ENCODE measurements at regions of chr1 and their contacts with region 1.

Region 1: DNA sequence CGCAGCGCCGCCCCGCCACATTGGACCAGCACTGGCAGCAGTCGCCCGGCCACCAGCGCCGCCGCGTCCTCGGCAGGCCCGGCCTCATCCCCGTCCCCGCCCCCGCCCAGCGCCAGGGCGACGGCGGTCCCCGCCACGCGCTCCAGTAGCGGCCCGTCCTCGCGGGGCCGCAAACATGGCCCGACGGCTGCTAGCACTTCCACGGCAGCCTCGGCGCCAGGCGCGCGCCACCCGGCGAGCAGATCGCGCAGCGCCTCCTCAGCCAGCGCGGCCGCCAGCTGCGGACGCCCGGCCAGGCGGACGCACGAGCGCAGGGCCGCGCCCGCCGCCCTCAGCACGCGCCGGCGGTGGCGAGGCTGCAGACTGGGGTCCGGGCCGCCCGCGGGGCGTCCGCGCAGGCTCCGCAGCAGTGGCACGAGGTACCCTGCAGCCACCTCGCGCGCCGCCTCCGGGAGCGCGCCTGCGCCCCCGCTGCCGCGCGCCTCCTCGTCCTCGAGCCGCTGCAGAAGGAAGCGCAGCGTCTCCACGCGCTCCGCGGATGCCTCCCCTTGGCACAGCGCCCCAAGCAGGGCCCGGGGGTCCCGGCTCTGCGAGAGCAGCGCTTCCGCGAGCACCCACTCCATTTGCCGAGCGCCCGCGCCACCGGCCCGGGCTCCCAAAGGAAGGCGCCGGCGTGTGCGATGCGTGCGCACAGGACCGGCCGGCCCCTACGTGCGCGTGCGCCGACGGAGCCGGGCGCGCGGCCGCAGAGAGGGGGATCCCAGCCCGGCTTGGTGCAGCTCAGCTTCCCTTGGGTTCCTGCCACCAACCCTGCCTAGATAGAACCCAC is at the start of gene TARBP1:
- DNase-seq: peak; percentile 84 to 95 (median 92)
- ATAC-seq: peak; percentile 85
- H3K4me3 ChIP-seq: peak within 1 kb of the TSS; percentile 73
- H3K27ac ChIP-seq: peak within 1 kb of the TSS; percentile 72
- H3K4me1 ChIP-seq: peaks cover 9 to 25% of the 10 kb centered on the region in 2 experiments; a peak in 4 of 5 replicates
- H3K27me3 ChIP-seq: peaks cover 0 to 5% of the 10 kb centered on the region in 2 experiments; a peak in 1 of 5 replicates
- CTCF ChIP-seq: peak; percentile 12 to 69 (median 41); a peak in 4 of 6 replicates
- EP300 ChIP-seq: no peak
- POLR2A ChIP-seq: peak; percentile 88
- RAD21 ChIP-seq: peak; percentile 21 to 56; a peak in 2 of 4 replicates
- polyA plus RNA-seq, gene TARBP1: 8.8 to 10.4 TPM

Region 2: DNA sequence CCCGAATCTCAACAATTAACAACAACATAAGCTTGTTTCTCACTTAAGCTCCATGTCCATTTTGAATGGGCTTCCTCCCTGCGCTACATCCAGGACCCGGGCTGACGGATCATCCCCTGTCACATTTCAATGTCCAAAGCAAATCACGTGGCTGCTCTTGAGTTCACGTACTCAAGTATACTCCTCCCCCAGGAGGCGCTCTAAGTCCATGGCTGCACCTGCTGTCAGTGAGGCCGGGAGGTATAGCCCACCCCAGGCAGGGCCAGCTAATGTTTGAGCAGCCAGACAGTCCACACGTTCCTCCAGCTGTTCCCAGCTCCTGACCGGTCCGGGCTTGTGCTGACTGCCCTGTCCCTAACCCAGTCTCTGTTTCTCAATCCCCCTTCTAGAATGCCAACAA is 353.4 kb before region 1 on chr1:
- CTCF ChIA-PET with region 1: no interaction called
- POLR2A ChIA-PET with region 1: no interaction called
- in situ Hi-C with region 1: loop called (anchors 10 kb)
- intact Hi-C with region 1: no loop called
- DNase-seq: peak; percentile 45 to 71 (median 52)
- ATAC-seq: peak; percentile 99
- H3K4me3 ChIP-seq: no peak overlapping the region
- H3K27ac ChIP-seq: no peak overlapping the region
- H3K4me1 ChIP-seq: no peaks in the 10 kb centered on the region
- H3K27me3 ChIP-seq: peaks cover 4 to 23% of the 10 kb centered on the region in 2 experiments
- CTCF ChIP-seq: peak; percentile 72 to 82 (median 73)
- EP300 ChIP-seq: no peak
- POLR2A ChIP-seq: no peak
- RAD21 ChIP-seq: peak; percentile 44 to 78

Region 3: DNA sequence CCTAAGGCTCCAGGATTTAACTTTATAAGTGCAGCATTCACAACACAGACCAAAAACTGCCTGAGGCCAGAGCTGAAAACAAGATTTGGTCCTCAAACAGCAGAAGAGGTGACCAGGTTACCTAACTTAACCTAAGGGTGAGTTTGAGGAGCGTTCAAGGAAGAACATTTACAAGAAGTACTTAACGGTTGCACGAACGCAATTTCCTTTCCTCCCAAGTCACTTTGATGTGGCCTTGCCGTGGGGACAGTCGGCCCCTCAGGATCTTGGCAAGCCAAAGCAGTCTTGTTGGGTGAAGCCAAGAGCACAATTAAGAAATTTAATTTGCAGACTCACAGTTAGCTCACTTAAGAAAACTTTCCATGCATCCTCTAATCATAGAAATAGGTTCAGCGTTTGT is 308.1 kb before region 1 on chr1:
- CTCF ChIA-PET with region 1: no interaction called
- POLR2A ChIA-PET with region 1: no interaction called
- in situ Hi-C with region 1: no loop called
- intact Hi-C with region 1: no loop called
- DNase-seq: no peak
- ATAC-seq: no peak
- H3K4me3 ChIP-seq: no peak overlapping the region
- H3K27ac ChIP-seq: no peak overlapping the region
- H3K4me1 ChIP-seq: no peaks in the 10 kb centered on the region
- H3K27me3 ChIP-seq: peaks cover 0 to 36% of the 10 kb centered on the region in 2 experiments; a peak in 3 of 5 replicates
- CTCF ChIP-seq: no peak
- EP300 ChIP-seq: no peak
- POLR2A ChIP-seq: no peak
- RAD21 ChIP-seq: no peak

Region 4: DNA sequence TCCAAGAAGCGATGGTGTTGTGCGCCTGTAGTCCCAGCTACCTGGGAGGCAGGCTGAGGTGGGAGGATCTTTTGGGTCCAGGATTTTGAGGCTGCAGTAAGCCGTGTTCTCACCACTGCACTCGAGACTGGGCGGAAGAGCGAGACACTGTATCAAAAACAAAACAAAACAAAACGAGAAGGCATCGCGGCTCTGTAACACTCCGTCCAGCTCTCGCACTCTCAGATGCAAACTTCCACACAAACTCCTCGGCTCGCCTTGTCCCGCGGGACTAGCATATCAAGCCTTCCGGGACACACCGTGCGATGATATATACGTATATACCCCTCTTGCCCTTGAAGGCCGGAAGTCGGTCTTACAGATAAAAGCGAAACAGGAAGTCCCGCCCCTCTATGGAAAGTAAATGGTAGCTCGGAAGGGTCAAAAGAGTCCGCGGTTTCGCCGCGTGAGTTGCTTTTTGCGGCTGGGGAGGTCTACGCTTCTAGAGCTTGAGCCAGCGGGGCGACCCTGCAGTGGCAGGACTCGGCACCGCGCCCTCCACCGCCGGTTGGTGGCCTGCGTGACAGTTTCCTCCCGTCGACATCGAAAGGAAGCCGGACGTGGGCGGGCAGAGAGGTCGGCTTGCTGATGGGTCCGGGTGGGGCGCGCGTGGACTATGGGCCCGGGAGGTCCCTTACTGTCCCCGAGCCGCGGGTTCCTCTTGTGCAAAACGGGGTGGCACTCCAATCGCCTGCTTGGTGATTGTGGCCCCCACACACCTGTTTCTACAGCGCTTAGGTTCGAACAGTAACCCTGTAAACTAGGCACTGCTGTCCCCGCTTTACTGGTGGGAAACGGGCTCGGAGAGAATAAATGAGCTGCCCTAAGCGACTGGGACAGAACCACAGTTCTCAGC is 105.4 kb before region 1 on chr1 and contains the start of gene COA6:
- CTCF ChIA-PET with region 1: no interaction called
- POLR2A ChIA-PET with region 1: interaction called, 5 read pairs
- in situ Hi-C with region 1: no loop called
- intact Hi-C with region 1: loop called (anchors 2 kb)
- DNase-seq: peak; percentile 90 to 99 (median 92)
- ATAC-seq: peak; percentile 90
- H3K4me3 ChIP-seq: peak within 1 kb of the TSS; percentile 81
- H3K27ac ChIP-seq: peak within 1 kb of the TSS; percentile 93
- H3K4me1 ChIP-seq: peaks cover 5 to 36% of the 10 kb centered on the region in 2 experiments
- H3K27me3 ChIP-seq: no peaks in the 10 kb centered on the region
- CTCF ChIP-seq: no peak; a peak in 1 of 6 replicates
- EP300 ChIP-seq: peak; percentile 63
- POLR2A ChIP-seq: peak; percentile 100
- RAD21 ChIP-seq: peak in 1 of 2 experiments; percentile 20; a peak in 2 of 4 replicates
- polyA plus RNA-seq, gene COA6: 171 to 187 TPM

Region 5: GRCh38 chr1:234452091-234452954 is 26.4 kb before region 1 on chr1:
- CTCF ChIA-PET with region 1: no interaction called
- POLR2A ChIA-PET with region 1: no interaction called
- in situ Hi-C with region 1: no loop called
- intact Hi-C with region 1: no loop called
- DNase-seq: no peak
- ATAC-seq: no peak
- H3K4me3 ChIP-seq: no peak overlapping the region
- H3K27ac ChIP-seq: no peak overlapping the region
- H3K4me1 ChIP-seq: no peaks in the 10 kb centered on the region
- H3K27me3 ChIP-seq: no peaks in the 10 kb centered on the region
- CTCF ChIP-seq: no peak
- EP300 ChIP-seq: no peak
- POLR2A ChIP-seq: no peak
- RAD21 ChIP-seq: no peak

Region 6: GRCh38 chr1:234564642-234565037 is 85.9 kb after region 1 on chr1:
- CTCF ChIA-PET with region 1: no interaction called
- POLR2A ChIA-PET with region 1: no interaction called
- in situ Hi-C with region 1: no loop called
- intact Hi-C with region 1: no loop called
- DNase-seq: no peak
- ATAC-seq: peak; percentile 75
- H3K4me3 ChIP-seq: no peak overlapping the region
- H3K27ac ChIP-seq: no peak overlapping the region
- H3K4me1 ChIP-seq: no peaks in the 10 kb centered on the region; a peak in 2 of 5 replicates
- H3K27me3 ChIP-seq: no peaks in the 10 kb centered on the region
- CTCF ChIP-seq: no peak
- EP300 ChIP-seq: no peak
- POLR2A ChIP-seq: no peak
- RAD21 ChIP-seq: no peak

Region 7: DNA sequence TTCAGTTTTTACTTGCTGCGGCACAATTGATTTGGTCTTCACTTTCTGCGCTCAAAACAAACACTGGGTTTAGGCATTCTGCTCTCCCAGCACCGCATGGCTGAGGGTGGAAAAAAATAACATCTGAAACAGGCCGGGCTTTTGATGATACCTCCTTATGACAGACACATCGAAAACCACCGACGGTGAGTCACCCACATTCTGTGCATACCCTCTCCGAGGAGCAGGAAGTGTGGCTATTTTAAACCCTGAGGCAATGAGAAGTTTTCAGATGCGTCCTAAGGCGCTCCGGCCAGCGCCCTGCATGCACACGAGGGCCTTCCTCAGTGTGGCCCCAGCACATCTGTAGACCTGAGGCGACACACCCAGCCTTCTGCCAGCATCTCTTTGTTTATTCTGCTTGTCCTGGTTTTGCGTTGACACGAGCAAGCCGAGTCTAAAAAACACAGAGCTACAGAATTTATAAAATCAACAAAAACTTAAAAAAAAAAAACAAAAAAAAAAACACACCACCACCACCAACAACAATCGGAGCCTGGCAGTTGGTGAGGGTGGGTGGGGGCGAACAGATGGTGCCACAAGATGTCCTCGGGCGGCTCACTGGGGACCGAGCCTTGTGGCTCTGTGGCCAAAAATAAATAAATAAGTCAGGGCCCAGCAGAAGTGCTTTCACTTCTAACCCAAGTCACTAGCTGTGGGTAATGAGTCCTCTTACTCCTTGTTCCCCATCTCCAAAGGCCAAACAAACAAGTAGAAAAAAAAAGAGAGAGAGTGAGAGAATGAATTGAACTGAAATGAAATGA is 293.9 kb after region 1 on chr1:
- CTCF ChIA-PET with region 1: no interaction called
- POLR2A ChIA-PET with region 1: no interaction called
- in situ Hi-C with region 1: no loop called
- intact Hi-C with region 1: no loop called
- DNase-seq: peak; percentile 60 to 88 (median 72)
- ATAC-seq: peak; percentile 85
- H3K4me3 ChIP-seq: no peak overlapping the region
- H3K27ac ChIP-seq: peak overlapping the region; percentile 53; the same call in 2 of the 3 replicates
- H3K4me1 ChIP-seq: peaks cover 26 to 43% of the 10 kb centered on the region in 2 experiments
- H3K27me3 ChIP-seq: peaks cover 8 to 14% of the 10 kb centered on the region in 2 experiments; a peak in 4 of 5 replicates
- CTCF ChIP-seq: no peak
- EP300 ChIP-seq: peak; percentile 51; the same call in 1 of the 2 replicates
- POLR2A ChIP-seq: no peak
- RAD21 ChIP-seq: peak; percentile 7 to 27; a peak in 2 of 4 replicates

Measured in K562 (cell line).